HEK293 (cell line): ENCODE measurements at regions of chr6 and their contacts with region 1.

Region 1: GRCh38 chr6:12911387-12911960 is 194.9 kb downstream of the PHACTR1 start:
- H3K4me3 ChIP-seq: no peak overlapping the region
- H3K27ac ChIP-seq: no peak overlapping the region
- H3K4me1 ChIP-seq: no peaks in the 10 kb centered on the region
- CTCF ChIP-seq: no peak

Region 2: DNA sequence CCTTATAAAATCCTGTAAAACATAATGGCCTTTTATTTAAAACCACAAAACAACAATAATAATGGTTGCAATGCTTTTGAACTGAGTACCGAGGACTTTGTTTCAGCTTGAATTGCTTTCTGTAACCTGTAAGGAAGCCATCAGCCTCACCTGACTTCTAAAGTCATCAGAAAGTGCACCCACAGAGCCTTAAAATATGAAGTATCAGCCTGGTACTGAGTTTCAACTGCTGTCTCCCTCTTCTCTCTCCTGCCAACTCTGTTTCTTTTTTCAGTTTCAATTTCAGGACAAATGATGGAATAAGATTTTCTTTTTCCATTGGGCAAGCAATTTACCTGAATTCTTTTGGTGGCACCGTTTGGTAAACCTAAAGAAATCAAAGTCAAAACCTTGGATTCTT is 75.5 kb before region 1 on chr6:
- CTCF ChIA-PET with region 1: no interaction called
- POLR2A ChIA-PET with region 1: no interaction called
- H3K4me3 ChIP-seq: no peak overlapping the region
- H3K27ac ChIP-seq: no peak overlapping the region
- H3K4me1 ChIP-seq: no peaks in the 10 kb centered on the region
- CTCF ChIP-seq: no peak

Region 3: GRCh38 chr6:12865671-12866181 is 45.7 kb before region 1 on chr6:
- CTCF ChIA-PET with region 1: no interaction called
- POLR2A ChIA-PET with region 1: no interaction called
- H3K4me3 ChIP-seq: no peak overlapping the region
- H3K27ac ChIP-seq: no peak overlapping the region
- H3K4me1 ChIP-seq: no peaks in the 10 kb centered on the region
- CTCF ChIP-seq: no peak

Region 4: GRCh38 chr6:12890171-12890790 is 21.2 kb before region 1 on chr6:
- CTCF ChIA-PET with region 1: no interaction called
- POLR2A ChIA-PET with region 1: no interaction called
- H3K4me3 ChIP-seq: no peak overlapping the region
- H3K27ac ChIP-seq: no peak overlapping the region
- H3K4me1 ChIP-seq: no peaks in the 10 kb centered on the region
- CTCF ChIP-seq: no peak

Region 5: GRCh38 chr6:13120483-13121482 is 209.3 kb after region 1 on chr6:
- CTCF ChIA-PET with region 1: interaction called, 27 read pairs
- POLR2A ChIA-PET with region 1: interaction called, 5 read pairs
- H3K4me3 ChIP-seq: no peak overlapping the region
- H3K27ac ChIP-seq: no peak overlapping the region
- H3K4me1 ChIP-seq: no peaks in the 10 kb centered on the region
- CTCF ChIP-seq: peak; percentile 45; the same call in 1 of the 2 replicates

Region 6: DNA sequence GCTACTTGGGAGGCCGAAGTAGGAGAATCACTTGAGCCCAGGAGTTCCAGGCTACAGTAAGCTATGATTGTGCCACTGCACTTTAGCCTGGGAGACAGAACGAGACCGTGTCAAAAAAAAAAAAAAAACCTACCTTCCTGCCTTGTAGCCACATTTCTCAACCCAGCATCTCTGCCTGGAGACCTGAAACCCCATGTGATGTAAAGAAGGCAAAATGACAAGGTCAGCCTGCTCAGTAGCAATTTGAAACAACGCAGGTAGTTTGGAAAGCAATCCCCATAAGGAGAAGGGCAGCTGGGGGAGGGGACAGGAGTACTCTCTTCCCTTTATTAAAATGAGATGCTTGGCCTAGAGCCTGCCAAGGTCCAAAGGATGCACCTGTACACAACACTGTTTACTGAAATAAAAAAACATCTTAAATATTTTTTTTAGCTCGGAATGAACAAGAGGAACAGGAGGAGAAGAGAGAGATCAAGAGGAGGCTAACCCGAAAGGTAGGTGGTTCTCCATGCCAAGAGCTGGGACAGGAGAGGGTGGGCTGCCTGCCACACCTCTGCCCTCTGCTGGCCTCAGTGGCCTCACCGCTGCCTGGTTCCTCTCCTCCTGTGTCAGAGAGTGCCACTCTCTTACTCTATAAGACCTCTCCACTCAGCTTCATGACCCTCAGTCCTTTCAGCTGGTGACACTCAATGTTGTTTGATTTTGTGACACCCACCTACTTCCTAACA is 366.5 kb after region 1 on chr6:
- CTCF ChIA-PET with region 1: interaction called, 14 read pairs
- POLR2A ChIA-PET with region 1: no interaction called
- H3K4me3 ChIP-seq: no peak overlapping the region
- H3K27ac ChIP-seq: no peak overlapping the region
- H3K4me1 ChIP-seq: no peaks in the 10 kb centered on the region
- CTCF ChIP-seq: peak; percentile 60

Region 7: GRCh38 chr6:13328076-13328874 is 416.8 kb after region 1 on chr6 and contains the start of gene TBC1D7:
- CTCF ChIA-PET with region 1: interaction called, 102 read pairs
- POLR2A ChIA-PET with region 1: interaction called, 17 read pairs
- H3K4me3 ChIP-seq: peak within 1 kb of the TSS; percentile 97
- H3K27ac ChIP-seq: peak within 1 kb of the TSS; percentile 83
- H3K4me1 ChIP-seq: peaks cover 3% of the 10 kb centered on the region; the same call in 1 of the 2 replicates
- CTCF ChIP-seq: peak; percentile 40; the same call in 1 of the 2 replicates